Activated CD4-positive, alpha-beta T cell treated with anti-CD3 and anti-CD28 coated beads, Interleukin-2, amount 10 ng/mL, durations not matched to agents 7 days and 5 days (primary cell): ENCODE measurements at regions of chr14 and their contacts with region 1.

Region 1: DNA sequence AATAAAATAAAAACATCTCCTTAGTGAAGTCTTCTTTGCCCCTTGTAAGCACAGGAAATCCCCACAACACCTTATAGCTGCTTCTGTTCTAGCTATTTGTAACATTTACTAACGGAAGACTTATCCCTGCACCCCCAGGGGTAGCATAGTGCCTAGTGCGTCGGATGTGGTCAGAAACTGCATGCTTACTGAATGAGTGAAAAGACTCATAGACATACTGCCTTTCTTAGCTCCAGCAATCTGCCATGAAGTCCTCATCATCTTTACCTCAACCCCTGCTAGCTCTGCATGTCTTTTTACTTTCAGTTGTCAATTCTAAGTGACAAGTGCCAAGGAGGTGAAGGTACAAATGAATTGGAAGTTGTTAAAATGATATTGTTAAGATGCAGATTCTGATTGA is 12.9 kb downstream of the RIOX1 start:
- DNase-seq: no peak
- H3K4me3 Mint-ChIP-seq: no peak overlapping the region
- H3K27ac Mint-ChIP-seq: no peak overlapping the region
- H3K4me1 Mint-ChIP-seq: no peaks in the 10 kb centered on the region
- H3K27me3 Mint-ChIP-seq: no peaks in the 10 kb centered on the region

Region 2: GRCh38 chr14:73491256-73492042 is 12.2 kb before region 1 on chr14:
- CTCF ChIA-PET with region 1: interaction called, 10 read pairs
- POLR2A ChIA-PET with region 1: no interaction called
- DNase-seq: peak; percentile 70
- H3K4me3 Mint-ChIP-seq: peak overlapping the region; percentile 83
- H3K27ac Mint-ChIP-seq: peak overlapping the region; percentile 92
- H3K4me1 Mint-ChIP-seq: peaks cover 46% of the 10 kb centered on the region
- H3K27me3 Mint-ChIP-seq: peaks cover 7% of the 10 kb centered on the region

Region 3: GRCh38 chr14:73524493-73524892 is 20.8 kb after region 1 on chr14:
- CTCF ChIA-PET with region 1: interaction called, 27 read pairs
- POLR2A ChIA-PET with region 1: no interaction called
- DNase-seq: no peak
- H3K4me3 Mint-ChIP-seq: no peak overlapping the region
- H3K27ac Mint-ChIP-seq: no peak overlapping the region
- H3K4me1 Mint-ChIP-seq: no peaks in the 10 kb centered on the region
- H3K27me3 Mint-ChIP-seq: no peaks in the 10 kb centered on the region

Region 4: GRCh38 chr14:73633116-73634010 is 129.7 kb after region 1 on chr14:
- CTCF ChIA-PET with region 1: interaction called, 12 read pairs
- POLR2A ChIA-PET with region 1: no interaction called
- DNase-seq: peak; percentile 63
- H3K4me3 Mint-ChIP-seq: peak overlapping the region; percentile 59
- H3K27ac Mint-ChIP-seq: no peak overlapping the region
- H3K4me1 Mint-ChIP-seq: peaks cover 5% of the 10 kb centered on the region
- H3K27me3 Mint-ChIP-seq: peaks cover 27% of the 10 kb centered on the region